Left ventricle myocardium inferior (tissue), 1 donor: ENCODE measurements at regions of chr20 and their contacts with region 1.

Region 1: DNA sequence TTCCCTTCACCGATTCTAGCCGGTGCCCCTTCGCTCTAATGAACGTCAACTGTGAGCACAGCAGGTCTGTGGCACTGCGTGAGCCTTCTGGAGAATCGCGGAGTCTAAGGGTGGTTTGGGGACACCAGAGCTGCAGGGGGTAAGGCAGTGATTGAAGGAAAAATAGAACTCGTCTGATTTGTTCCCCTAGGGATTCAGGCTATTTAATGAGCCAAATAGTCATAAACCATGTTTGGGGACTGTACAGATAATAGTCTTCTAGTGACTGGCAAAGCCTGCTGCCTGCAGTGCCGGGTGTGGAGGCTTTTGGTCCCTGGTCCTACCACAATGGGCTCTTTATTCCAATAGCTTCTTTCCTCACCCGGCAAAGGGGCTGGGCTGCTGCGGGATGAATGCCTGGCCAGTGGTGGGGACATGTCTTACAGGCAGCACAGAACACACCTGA is 11.1 kb upstream of the NTSR1 start:
- DNase-seq: no peak
- H3K4me3 ChIP-seq: no peak overlapping the region
- H3K27ac ChIP-seq: no peak overlapping the region
- H3K4me1 ChIP-seq: no peaks in the 10 kb centered on the region
- H3K27me3 ChIP-seq: peaks cover 30% of the 10 kb centered on the region
- CTCF ChIP-seq: no peak

Region 2: GRCh38 chr20:62768481-62769287 is 71.2 kb after region 1 on chr20:
- intact Hi-C with region 1: loop called (anchors 10 kb)
- DNase-seq: no peak
- H3K4me3 ChIP-seq: no peak overlapping the region
- H3K27ac ChIP-seq: no peak overlapping the region
- H3K4me1 ChIP-seq: peaks cover 9% of the 10 kb centered on the region
- H3K27me3 ChIP-seq: peaks cover 72% of the 10 kb centered on the region
- CTCF ChIP-seq: no peak